ENCODE measurements at regions of chr18 and their contacts with region 1.

Region 1: DNA sequence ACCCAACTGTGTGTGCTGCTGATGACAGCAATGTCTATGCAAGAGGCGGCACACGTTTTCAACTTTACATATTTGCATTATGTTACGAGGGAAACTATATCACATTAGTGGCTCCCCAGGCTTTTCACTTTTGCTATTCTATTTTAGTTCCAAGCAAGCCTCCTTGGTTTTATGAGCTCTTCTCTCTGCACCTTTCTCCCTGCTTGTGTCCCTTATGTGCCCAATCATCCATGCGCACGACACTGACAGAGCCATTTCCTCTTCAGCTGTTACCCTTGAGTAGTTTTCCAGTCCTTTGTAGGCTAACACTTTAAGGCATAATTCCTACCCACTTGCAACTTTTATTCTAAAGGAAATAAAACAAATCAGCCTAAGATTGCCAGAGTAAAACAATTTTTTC is 154.3 kb downstream of the TCF4 start:
- DNase-seq: no peak
- ATAC-seq: no peak

Region 2: DNA sequence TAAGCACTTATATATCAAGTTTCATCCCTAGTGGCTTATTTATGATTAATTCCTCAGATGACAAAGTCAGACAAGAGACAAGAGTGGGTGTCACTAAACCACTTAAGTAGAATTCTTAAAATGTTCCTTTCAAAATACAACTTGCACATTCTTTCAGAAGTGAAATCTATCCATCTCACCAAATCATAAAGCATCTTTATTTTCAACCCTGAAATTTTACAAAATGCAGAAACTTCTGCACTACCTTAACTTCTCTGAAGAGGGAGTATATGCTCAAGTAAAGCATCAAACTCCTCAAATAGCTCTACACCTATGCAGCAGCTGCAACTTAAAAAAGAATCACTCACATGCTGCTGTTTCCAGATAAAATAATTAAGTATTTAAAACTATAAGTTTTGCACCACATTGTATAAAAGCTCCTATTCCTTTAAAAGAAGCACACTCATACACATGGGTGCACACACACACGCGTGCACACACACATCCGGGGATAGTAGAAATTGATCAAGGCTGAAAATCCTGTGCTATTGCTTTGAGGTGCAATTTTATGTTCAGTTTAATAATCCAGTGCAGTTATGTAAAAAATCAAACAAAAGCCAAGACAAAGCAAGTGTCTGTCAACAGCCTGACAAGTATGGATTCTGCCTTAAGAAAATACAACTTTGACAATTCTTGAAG is 90.1 kb before region 1 on chr18:
- intact Hi-C with region 1: no loop called
- DNase-seq: no peak
- ATAC-seq: peak; percentile 44

Region 3: GRCh38 chr18:55489034-55489986 is 55.7 kb after region 1 on chr18:
- intact Hi-C with region 1: loop called (anchors 5 kb)
- DNase-seq: no peak
- ATAC-seq: no peak

Measured in Right ventricle myocardium inferior (tissue), 1 donor.